Tibial artery (tissue), 4 donors: ENCODE measurements at regions of chr18 and their contacts with region 1.

Region 1: DNA sequence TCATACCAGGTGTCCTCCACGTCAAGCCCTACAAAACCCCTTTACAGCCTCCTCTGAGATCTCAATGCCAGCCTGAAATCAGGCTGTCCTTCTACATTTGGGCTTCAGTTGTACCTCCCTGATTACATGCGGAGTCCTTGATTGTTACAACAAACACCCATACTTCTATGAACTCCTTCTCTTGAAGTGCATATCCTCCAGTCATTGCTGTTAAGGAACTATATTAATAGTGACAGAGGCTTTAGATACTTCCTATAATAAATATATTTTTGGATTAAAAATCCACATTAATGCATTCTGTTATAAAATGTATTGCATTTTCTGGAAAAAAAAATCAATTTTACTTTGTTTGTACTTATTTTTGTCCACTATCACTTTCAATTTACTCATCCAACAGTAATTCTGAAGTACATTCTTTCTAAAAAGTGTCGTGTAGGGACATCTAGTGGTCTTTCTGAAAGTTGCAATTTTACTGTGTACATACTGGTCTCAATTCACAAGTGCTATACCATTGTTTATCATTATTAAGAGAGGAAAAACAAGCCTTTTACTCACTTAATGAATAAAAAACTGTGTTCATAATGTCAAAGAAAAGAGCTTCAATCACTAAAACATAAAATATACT is 316.4 kb downstream of the DSEL start:
- DNase-seq: no peak
- H3K4me3 ChIP-seq: no peak overlapping the region
- H3K27ac ChIP-seq: no peak overlapping the region
- H3K4me1 ChIP-seq: no peaks in the 10 kb centered on the region
- H3K27me3 ChIP-seq: peaks cover 0 to 9% of the 10 kb centered on the region in 2 donors
- CTCF ChIP-seq: peak; percentile 48 to 61

Region 2: GRCh38 chr18:67072791-67073190 is 127.3 kb before region 1 on chr18:
- intact Hi-C with region 1: no loop called
- DNase-seq: no peak
- H3K4me3 ChIP-seq: no peak overlapping the region
- H3K27ac ChIP-seq: no peak overlapping the region
- H3K4me1 ChIP-seq: no peaks in the 10 kb centered on the region
- H3K27me3 ChIP-seq: no peaks in the 10 kb centered on the region
- CTCF ChIP-seq: no peak

Region 3: DNA sequence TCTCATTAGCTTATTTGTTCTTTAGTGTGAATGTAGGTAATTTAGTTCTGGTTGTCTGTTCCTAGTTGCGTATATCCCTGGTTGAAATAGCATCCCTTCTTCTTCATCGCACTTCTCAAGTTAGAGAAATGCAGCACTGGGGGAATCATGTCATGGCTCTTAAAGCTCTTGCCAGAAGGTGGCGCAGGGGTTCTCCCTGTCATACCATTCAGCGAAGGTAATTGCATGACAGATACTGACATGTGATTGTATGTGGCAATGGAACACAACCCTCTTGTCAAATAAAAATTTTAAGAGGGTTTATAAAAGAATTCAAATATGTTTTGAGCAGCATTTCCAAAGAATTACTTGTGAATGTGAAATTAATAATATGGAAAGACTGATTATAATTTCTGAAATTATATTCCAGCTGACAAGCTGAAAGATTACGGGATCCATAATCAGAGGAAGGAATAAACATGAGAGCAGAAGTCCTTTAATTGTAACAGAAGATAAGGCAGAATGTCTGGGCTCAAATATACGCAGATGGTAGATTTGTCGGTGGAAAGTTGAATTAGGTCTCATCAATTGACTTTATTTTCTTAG is 95.3 kb before region 1 on chr18:
- intact Hi-C with region 1: loop called (anchors 10 kb)
- DNase-seq: peak in 1 of 2 donors; percentile 61
- H3K4me3 ChIP-seq: no peak overlapping the region
- H3K27ac ChIP-seq: no peak overlapping the region
- H3K4me1 ChIP-seq: no peaks in the 10 kb centered on the region
- H3K27me3 ChIP-seq: no peaks in the 10 kb centered on the region
- CTCF ChIP-seq: peak; percentile 54 to 60

Region 4: GRCh38 chr18:67692811-67693210 is 492.7 kb after region 1 on chr18:
- intact Hi-C with region 1: no loop called
- DNase-seq: no peak
- H3K4me3 ChIP-seq: no peak overlapping the region
- H3K27ac ChIP-seq: no peak overlapping the region
- H3K4me1 ChIP-seq: peaks cover 0 to 19% (median 2%) of the 10 kb centered on the region in 4 donors
- H3K27me3 ChIP-seq: no peaks in the 10 kb centered on the region
- CTCF ChIP-seq: no peak